AG04450 (cell line): ENCODE measurements at regions of chr1 and their contacts with region 1.

Region 1: GRCh38 chr1:171313835-171314320 is at the start of gene FMO4:
- DNase-seq: peak; percentile 97
- H3K4me3 ChIP-seq: peak within 1 kb of the TSS; percentile 27; the same call in 1 of the 2 replicates
- H3K27ac ChIP-seq: no peak within 1 kb of the TSS
- H3K27me3 ChIP-seq: no peaks in the 10 kb centered on the region
- CTCF ChIP-seq: peak; percentile 78
- polyA plus RNA-seq, gene FMO4: 0.46 and 1.2 TPM in 2 replicates

Region 2: DNA sequence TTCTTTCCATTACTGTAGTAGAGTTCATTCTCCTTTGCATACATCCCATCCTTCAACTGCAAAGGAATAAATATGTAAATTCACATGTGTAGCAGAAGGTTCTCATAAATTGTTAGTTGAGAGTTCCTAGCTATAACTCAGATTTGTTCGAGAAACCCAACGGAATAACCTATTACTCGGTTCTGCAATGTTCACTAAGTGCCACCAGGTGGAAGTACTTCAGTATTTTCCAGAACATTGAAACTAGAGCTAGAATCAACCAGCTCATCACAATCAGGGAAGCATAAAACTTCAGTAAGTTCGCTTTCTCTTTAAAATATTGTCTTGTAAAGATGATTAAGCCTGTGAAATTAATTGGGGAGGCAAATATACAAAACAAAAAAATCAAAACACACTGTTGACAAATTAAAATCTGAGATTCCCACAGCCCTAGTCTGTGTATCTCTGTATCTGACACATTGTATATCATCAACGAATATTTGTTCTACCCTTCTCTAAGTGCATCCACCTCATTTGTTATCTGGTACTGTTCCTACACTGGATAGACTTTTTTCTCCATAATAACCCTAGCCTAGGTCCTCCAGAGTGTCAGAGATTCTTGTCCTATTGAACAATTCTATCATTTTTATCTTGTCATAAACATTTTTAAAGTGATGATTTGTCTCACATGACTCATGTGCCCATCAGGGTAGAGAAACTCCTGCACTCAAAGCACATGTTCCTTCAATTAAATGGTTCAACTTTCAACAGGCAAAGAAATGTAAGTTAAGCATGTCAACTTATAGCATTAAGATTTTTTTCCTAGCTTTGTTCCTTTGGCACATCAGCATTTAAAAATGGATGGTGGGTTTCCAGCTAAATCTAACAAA is 346.6 kb before region 1 on chr1:
- CTCF ChIA-PET with region 1: interaction called, 114 read pairs
- POLR2A ChIA-PET with region 1: no interaction called
- DNase-seq: peak; percentile 23
- H3K4me3 ChIP-seq: no peak overlapping the region
- H3K27ac ChIP-seq: no peak overlapping the region
- H3K27me3 ChIP-seq: no peaks in the 10 kb centered on the region
- CTCF ChIP-seq: peak; percentile 72

Region 3: GRCh38 chr1:171233190-171233589 is 80.7 kb before region 1 on chr1:
- CTCF ChIA-PET with region 1: interaction called, 10 read pairs
- POLR2A ChIA-PET with region 1: no interaction called
- DNase-seq: no peak
- H3K4me3 ChIP-seq: no peak overlapping the region
- H3K27ac ChIP-seq: no peak overlapping the region
- H3K27me3 ChIP-seq: no peaks in the 10 kb centered on the region
- CTCF ChIP-seq: no peak

Region 4: DNA sequence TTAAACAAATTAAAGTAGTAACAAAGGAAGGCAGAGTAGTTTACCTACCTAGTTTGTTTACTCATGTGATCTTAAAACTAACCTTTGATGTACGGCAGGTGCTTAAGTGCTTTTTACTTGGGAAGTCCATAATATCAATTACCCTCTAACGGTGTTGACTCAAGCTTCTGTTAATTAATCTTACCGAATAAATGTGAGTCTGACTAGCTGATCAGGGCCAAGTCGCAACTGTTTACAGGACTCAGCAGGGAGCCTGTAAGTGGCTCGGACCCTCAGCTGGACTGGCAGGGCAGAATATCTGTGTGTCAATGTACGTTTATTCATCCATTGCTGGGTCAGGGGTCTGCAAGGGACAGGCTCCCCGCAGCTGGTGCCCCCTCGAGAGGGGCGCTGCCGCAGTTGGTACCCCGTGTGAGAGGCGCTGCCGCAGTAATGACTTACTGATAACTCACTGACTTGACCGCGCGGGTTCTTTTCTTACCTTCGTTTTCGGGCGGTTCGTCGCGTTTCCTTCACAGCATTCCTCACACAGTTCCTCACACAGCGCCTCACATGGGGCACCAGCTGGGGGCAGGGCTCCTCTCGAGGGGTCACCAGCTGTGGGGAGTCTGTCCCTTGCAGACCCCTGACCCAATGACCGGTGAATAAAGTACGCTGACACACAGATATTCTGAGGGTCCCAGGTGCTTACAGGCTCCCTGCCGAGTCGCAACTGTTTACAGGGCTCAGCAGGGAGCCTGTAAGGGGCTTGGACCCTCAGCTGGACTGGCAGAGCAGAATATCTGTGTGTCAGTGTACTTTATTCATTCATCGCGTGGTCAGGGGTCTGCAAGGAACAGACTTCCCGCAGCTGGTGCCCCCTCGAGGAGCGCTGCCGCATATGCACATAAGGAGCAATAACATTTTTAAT is 62.6 kb before region 1 on chr1:
- CTCF ChIA-PET with region 1: interaction called, 42 read pairs
- POLR2A ChIA-PET with region 1: no interaction called
- DNase-seq: no peak
- H3K4me3 ChIP-seq: peak overlapping the region; percentile 87
- H3K27ac ChIP-seq: no peak overlapping the region
- H3K27me3 ChIP-seq: no peaks in the 10 kb centered on the region
- CTCF ChIP-seq: peak; percentile 77

Region 5: DNA sequence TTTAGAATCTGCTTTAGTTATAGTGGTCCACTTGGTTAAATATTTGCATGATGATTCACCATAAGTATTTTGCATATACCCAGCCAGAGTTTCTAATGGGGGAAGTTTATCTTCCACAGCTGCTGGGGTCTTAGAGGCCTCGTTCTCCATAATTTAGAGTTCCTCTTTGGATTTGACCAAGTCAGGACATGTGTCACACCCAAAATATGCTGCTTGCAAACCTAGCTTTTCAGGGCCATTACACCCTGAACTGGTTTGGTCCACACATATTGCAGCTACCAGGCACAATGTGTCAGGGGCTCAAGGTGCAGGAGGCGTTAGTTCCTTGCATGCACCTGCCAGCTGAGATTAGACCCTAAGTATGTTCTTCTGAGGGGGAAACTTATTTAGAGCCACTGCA is 17.0 kb before region 1 on chr1:
- CTCF ChIA-PET with region 1: interaction called, 13 read pairs
- POLR2A ChIA-PET with region 1: no interaction called
- DNase-seq: no peak
- H3K4me3 ChIP-seq: no peak overlapping the region
- H3K27ac ChIP-seq: no peak overlapping the region
- H3K27me3 ChIP-seq: no peaks in the 10 kb centered on the region
- CTCF ChIP-seq: no peak

Region 6: DNA sequence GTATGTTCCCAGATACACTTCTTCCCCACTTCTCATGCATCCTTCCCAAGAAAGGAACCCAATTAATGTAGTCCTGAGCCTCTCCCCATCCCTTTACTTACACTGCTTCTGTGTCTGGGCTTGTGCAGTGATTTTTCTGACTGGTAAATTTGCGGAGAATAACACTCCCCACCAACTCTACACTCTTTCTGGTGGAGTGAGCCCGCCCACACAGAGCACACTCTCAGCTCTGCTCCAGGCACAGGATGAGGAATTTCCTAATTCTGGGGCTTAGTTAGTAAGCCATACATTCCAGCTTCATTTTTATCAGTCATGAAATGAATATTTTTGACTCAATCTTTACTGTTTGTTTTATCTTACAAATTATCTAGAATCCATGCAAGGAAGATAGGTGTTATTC is 38.7 kb after region 1 on chr1:
- CTCF ChIA-PET with region 1: no interaction called
- POLR2A ChIA-PET with region 1: no interaction called
- DNase-seq: no peak
- H3K4me3 ChIP-seq: no peak overlapping the region
- H3K27ac ChIP-seq: no peak overlapping the region
- H3K27me3 ChIP-seq: no peaks in the 10 kb centered on the region
- CTCF ChIP-seq: no peak

Region 7: DNA sequence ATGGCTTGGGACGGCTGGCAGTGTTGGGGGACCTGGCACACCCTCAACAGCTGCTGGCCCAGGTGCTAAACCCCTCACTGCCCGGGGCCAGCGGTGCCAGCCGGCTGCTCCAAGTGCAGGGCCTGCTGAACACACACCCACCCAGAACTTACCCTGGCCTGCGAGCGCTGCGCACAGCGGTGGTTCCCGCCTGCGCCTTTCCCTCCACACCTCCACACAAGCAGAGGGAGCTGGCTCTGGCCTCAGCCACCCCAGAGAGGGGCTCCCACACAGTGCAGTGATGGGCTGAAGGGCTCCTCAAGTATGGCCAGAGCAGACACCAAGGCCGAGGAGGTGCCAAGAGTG is 68.0 kb after region 1 on chr1:
- CTCF ChIA-PET with region 1: no interaction called
- POLR2A ChIA-PET with region 1: no interaction called
- DNase-seq: no peak
- H3K4me3 ChIP-seq: no peak overlapping the region
- H3K27ac ChIP-seq: no peak overlapping the region
- H3K27me3 ChIP-seq: no peaks in the 10 kb centered on the region
- CTCF ChIP-seq: no peak